GM10248 (cell line): ENCODE measurements at regions of chrX and their contacts with region 1.

Region 1: GRCh38 chrX:149470955-149471354 is 34.2 kb downstream of the IDS start:
- DNase-seq: peak; percentile 75
- CTCF ChIP-seq: peak; percentile 77

Region 2: GRCh38 chrX:148049441-148049840 is 1421.5 kb before region 1 on chrX:
- CTCF ChIA-PET with region 1: interaction called, 18 read pairs
- POLR2A ChIA-PET with region 1: no interaction called
- DNase-seq: peak; percentile 26
- CTCF ChIP-seq: peak; percentile 26

Region 3: DNA sequence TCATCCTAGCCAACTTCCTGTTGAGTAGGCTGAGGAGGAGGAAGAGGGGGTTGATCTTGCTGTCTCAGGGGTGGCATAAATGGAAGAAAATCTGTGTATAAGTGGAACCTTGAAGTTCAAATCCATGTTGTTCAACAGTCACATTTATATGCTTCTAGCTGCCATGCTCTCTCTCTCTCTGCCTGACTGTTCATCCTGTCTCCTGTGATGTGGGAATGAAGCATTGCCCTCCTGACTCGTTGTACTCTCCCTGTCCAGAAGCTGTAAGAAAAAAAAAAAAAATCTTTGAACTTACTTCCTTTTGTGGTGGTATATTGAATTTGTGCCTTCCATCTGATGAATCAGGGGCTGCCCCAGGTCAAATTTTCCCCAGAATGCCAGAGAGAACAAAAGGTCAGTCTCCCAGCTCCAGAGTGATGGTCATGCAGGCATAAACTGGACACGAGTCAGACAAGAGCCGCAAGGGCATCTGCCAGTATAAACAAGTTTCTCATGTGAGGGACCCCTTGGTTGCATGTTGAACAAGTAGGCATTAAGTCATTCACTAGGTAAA is 222.8 kb before region 1 on chrX:
- CTCF ChIA-PET with region 1: no interaction called
- POLR2A ChIA-PET with region 1: no interaction called
- DNase-seq: no peak
- CTCF ChIP-seq: no peak

Region 4: DNA sequence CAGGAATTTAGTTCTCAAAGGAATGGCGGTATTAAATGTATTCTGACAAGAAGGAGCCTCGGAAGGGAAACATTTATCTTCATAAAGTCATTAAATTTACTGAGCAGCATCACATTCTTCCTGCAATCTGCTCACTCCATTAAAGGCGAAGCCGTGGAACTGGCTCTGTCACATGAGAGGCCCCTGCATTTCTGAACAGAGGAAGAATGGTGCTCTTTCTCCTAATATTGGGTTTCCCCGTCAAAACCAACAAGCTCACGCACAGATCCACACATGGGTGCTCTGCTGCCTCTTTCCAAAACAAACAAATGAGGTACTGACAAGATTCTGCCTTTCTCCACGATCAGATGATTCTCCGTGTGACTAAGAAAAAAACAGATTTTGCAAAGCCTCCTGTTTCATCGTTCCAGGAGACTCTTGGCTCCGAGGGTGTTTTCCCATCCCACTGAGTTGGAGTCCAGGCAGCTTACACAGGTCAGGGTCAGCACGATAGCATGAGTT is 157.0 kb before region 1 on chrX:
- CTCF ChIA-PET with region 1: no interaction called
- POLR2A ChIA-PET with region 1: no interaction called
- DNase-seq: no peak
- CTCF ChIP-seq: no peak

Region 5: GRCh38 chrX:149386986-149387385 is 84.0 kb before region 1 on chrX:
- CTCF ChIA-PET with region 1: no interaction called
- POLR2A ChIA-PET with region 1: no interaction called
- DNase-seq: no peak
- CTCF ChIP-seq: no peak

Region 6: DNA sequence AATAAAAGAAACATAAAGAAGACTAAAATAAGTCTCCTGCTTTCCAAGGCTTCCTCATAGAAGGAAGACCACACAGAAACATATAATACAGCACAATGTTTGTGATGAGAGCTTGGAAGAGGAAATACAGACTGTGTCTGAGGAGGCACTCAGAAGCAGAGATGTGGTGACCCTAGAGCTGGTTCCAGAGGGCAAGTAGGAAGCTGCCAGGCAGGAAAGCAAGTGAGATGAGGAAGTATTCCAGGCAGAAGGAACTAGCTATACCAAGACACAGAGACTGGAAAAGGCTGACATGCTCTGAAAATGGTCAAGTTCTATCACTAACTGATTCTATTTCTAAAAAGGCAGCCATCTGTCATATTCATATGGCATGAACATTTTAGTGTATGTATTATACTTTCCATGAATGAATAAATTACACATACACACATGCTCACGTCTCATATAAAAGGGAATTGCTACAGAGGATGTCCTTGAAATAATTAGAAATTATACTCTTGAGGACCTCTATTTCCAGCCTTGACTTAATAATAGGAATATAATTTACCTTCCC is 140.7 kb after region 1 on chrX:
- CTCF ChIA-PET with region 1: no interaction called
- POLR2A ChIA-PET with region 1: no interaction called
- DNase-seq: no peak
- CTCF ChIP-seq: no peak